ENCODE measurements at regions of chr11 and their contacts with region 1.

Region 1: GRCh38 chr11:128630367-128631230 is 43.2 kb upstream of the ETS1 start:
- DNase-seq: peak; percentile 86
- ATAC-seq: peak; percentile 85
- H3K4me3 Mint-ChIP-seq: peak overlapping the region; percentile 50
- H3K27ac Mint-ChIP-seq: peak overlapping the region; percentile 92
- H3K4me1 Mint-ChIP-seq: peaks cover 68% of the 10 kb centered on the region
- H3K27me3 Mint-ChIP-seq: no peaks in the 10 kb centered on the region
- CTCF ChIP-seq: no peak

Region 2: GRCh38 chr11:128157423-128158298 is 472.9 kb before region 1 on chr11:
- CTCF ChIA-PET with region 1: interaction called, 30 read pairs
- POLR2A ChIA-PET with region 1: no interaction called
- intact Hi-C with region 1: loop called (anchors 1 kb)
- DNase-seq: no peak
- ATAC-seq: peak; percentile 92
- H3K4me3 Mint-ChIP-seq: peak overlapping the region; percentile 82
- H3K27ac Mint-ChIP-seq: peak overlapping the region; percentile 50
- H3K4me1 Mint-ChIP-seq: no peaks in the 10 kb centered on the region
- H3K27me3 Mint-ChIP-seq: peaks cover 19% of the 10 kb centered on the region
- CTCF ChIP-seq: no peak

Region 3: DNA sequence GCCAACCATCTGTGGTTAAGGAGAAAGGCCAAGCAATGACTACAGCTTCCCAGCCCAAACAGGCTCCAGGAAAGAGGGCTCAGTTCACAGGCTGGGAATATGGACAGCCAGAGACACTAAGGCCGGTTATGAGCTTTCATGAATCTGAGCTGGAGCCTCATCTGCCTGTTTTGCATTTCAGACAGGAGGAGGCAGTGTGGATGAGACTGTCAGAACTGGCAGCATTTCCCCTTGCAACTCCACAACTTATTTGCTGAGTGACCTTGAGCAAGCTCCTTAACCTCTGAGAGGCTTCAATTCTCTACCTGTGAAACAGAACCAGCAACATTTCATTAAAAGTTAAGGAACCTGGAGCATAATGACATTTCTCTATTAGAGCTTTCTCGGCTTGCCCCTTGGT is 307.2 kb before region 1 on chr11:
- CTCF ChIA-PET with region 1: interaction called, 39 read pairs
- POLR2A ChIA-PET with region 1: interaction called, 8 read pairs
- intact Hi-C with region 1: loop called (anchors 1 kb)
- DNase-seq: no peak
- ATAC-seq: peak; percentile 25
- H3K4me3 Mint-ChIP-seq: no peak overlapping the region
- H3K27ac Mint-ChIP-seq: peak overlapping the region; percentile 59
- H3K4me1 Mint-ChIP-seq: peaks cover 49% of the 10 kb centered on the region
- H3K27me3 Mint-ChIP-seq: no peaks in the 10 kb centered on the region
- CTCF ChIP-seq: no peak

Region 4: DNA sequence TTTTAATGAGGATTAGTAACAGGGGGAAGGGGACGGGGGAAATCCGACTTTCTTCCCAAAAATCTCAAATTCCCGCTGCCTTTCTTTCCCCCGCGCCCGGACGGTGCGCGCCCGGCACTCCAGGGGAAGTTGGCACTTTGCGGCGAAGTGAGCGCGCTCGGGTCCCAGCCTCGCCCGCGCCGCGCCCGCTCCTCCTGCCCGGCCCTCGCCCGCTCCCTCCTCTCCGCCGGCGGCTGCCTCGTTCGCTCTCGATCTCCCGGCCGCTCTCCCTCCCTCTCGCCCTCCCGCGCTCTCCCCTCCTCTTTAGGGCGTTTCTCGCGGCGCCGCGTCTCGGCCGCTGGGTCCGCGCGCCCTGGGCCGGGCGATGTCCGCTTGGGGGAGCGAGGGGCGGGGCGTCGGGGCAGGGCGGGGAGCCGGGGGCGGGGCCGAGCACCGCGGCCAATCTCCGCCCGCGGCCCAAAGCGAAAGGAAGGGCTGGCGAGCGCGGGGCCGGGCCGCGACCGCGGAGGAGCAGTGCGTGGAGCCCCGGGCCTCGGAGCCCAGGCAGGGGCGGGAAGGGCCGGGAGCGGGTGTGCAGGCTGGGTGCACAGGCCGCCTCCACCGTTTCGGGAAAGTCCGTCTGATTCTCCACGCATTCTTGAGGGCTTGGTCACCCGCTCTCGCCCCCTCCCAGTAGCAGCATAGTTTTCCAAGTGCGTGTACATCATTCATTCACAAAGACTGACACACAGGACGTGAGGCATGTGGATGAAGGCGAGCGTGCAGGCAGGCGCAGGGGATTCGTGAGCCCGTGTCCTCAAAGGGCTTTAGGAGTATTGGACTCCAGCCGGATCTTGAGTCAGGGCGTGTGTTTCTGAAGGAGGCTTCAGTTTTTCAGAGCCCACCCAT is 108.3 kb before region 1 on chr11:
- CTCF ChIA-PET with region 1: interaction called, 33 read pairs
- POLR2A ChIA-PET with region 1: interaction called, 283 read pairs
- intact Hi-C with region 1: loop called (anchors 1 kb)
- DNase-seq: peak; percentile 88
- ATAC-seq: peak; percentile 89
- H3K4me3 Mint-ChIP-seq: peak overlapping the region; percentile 99
- H3K27ac Mint-ChIP-seq: peak overlapping the region; percentile 97
- H3K4me1 Mint-ChIP-seq: peaks cover 56% of the 10 kb centered on the region
- H3K27me3 Mint-ChIP-seq: no peaks in the 10 kb centered on the region
- CTCF ChIP-seq: no peak

Region 5: GRCh38 chr11:128610721-128611617 is 19.6 kb before region 1 on chr11:
- CTCF ChIA-PET with region 1: interaction called, 284 read pairs
- POLR2A ChIA-PET with region 1: interaction called, 574 read pairs
- intact Hi-C with region 1: no loop called
- DNase-seq: peak; percentile 79
- ATAC-seq: peak; percentile 87
- H3K4me3 Mint-ChIP-seq: peak overlapping the region; percentile 79
- H3K27ac Mint-ChIP-seq: peak overlapping the region; percentile 94
- H3K4me1 Mint-ChIP-seq: peaks cover 93% of the 10 kb centered on the region
- H3K27me3 Mint-ChIP-seq: no peaks in the 10 kb centered on the region
- CTCF ChIP-seq: no peak

Region 6: GRCh38 chr11:128831174-128832120 is 200.8 kb after region 1 on chr11:
- CTCF ChIA-PET with region 1: interaction called, 70 read pairs
- POLR2A ChIA-PET with region 1: interaction called, 3 read pairs
- intact Hi-C with region 1: loop called (anchors 1 kb)
- DNase-seq: peak; percentile 75
- ATAC-seq: peak; percentile 92
- H3K4me3 Mint-ChIP-seq: peak overlapping the region; percentile 70
- H3K27ac Mint-ChIP-seq: peak overlapping the region; percentile 91
- H3K4me1 Mint-ChIP-seq: peaks cover 80% of the 10 kb centered on the region
- H3K27me3 Mint-ChIP-seq: no peaks in the 10 kb centered on the region
- CTCF ChIP-seq: no peak

Measured in activated B cell treated with CpG ODN at 0.5 μM for 24 hours (primary cell).